OCI-LY7 (cell line): ENCODE measurements at regions of chr18 and their contacts with region 1.

Region 1: DNA sequence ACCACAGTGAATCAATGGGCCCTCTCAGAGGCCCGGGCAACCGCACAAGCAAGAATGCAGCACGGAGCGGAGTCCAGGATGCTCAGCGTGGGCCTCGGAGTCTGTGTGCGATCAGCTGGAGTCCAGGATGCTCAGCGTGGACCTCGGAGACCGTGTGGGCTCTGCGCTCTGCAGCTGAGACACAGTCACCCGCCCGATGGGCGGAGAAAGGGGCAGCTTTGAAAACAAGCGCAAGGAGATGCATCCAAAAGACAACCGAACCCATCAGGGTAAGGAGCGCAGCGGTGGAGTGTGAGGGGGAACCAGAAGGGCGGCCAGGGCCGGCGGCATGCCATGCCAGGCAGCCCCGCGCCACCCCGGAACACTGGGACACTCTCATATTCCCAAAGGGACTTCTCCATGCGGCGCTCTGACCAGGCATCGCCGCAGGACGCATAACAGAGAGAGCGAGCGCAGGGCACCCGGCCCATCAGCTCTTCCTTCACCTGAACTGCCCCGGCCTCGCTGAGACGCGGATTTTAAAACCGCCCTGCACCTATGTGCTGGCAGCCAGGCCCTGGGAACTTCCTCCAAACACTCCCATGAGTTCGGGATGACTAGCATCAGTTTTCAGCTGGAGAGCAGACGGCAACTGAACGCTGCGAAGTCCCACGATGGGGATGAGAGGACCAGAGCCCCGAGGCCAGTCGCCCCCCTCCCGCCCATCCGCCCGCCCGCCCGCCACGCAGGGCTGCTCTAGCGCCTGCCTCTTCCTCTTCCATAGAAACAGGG is 44.7 kb downstream of the MC5R start:
- DNase-seq: no peak
- H3K4me3 ChIP-seq: no peak overlapping the region
- H3K27ac ChIP-seq: no peak overlapping the region
- H3K4me1 ChIP-seq: no peaks in the 10 kb centered on the region
- CTCF ChIP-seq: no peak

Region 2: DNA sequence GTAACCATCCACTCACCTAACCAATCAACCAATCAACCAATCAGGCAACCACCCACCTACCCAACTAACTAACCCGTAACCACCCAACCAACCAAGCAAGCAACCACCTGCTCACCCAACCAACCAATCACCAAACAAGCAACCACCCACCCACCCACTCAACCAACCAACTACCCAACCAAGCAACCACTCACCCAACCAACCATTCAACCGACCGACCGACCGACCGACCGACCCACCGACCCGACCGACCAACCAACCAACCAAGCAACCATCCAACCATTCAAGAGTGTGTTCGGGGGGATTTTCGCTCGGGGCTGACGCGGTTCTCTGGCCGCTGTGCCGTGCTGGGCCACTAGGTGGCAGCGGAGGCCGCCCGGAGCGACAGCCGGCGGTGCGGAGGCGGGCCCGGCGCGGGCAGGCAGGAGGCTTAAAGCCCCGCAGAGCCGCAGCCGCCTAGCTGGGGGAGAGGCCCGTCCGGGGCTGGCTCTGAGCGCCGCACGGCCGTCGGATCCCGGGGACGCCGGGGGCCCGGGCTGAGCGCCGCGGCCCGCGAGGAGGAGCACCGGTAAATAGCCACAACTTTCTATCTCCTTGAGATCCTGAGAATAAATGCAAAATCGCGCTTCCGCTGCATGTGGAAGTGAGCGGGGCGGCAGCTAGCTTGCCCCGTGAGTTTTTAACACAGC is 44.8 kb before region 1 on chr18 and contains the start of gene MC5R:
- CTCF ChIA-PET with region 1: no interaction called
- POLR2A ChIA-PET with region 1: no interaction called
- intact Hi-C with region 1: loop called (anchors 5 kb)
- DNase-seq: peak; percentile 68
- H3K4me3 ChIP-seq: peak within 1 kb of the TSS; percentile 50
- H3K27ac ChIP-seq: no peak within 1 kb of the TSS
- H3K4me1 ChIP-seq: no peaks in the 10 kb centered on the region
- CTCF ChIP-seq: peak; percentile 86
- total RNA-seq, gene MC5R: not detected in 2 replicates

Region 3: GRCh38 chr18:13982136-13982535 is 113.5 kb after region 1 on chr18:
- CTCF ChIA-PET with region 1: no interaction called
- POLR2A ChIA-PET with region 1: no interaction called
- intact Hi-C with region 1: loop called (anchors 10 kb)
- DNase-seq: no peak
- H3K4me3 ChIP-seq: no peak overlapping the region
- H3K27ac ChIP-seq: no peak overlapping the region
- H3K4me1 ChIP-seq: no peaks in the 10 kb centered on the region
- CTCF ChIP-seq: 0 out of 2 replicates have a peak, but pooled peaks have one; percentile 25